GM12878 (cell line): ENCODE measurements at regions of chr14 and their contacts with region 1.

Region 1: DNA sequence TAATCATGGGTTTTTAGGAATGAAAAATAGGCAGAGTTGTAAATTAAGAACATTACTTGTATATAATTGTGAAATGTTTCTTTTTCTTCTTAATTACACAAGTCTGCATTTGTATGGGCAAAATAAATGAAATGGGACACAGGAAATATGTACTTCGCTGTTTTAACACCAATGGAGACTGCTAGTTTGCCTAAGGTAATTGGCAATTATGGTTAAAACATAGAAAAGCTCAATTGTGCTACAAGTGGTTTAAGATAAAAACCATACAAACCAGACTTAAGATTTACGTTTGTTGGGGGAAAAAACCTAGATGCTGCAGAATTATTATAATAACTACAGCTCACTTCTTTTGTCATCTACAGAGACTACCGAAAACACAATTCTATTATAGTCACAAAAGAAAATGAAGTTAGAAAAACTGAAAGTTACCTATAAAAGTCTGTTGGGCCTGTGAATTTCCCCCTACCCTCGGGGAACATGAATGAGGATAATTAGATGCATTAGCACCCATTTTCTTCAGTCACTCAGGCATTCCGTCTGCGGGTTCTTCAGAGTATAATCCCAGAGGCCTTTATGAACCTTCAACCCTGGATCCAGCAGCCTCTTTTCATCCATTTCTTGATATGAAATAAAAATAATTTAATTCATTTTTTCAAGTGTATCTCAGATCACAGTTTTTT is 37.2 kb downstream of the BTBD7 start:
- DNase-seq: no peak
- ATAC-seq: peak; percentile 31
- H3K4me3 ChIP-seq: no peak overlapping the region
- H3K27ac ChIP-seq: no peak overlapping the region
- H3K4me1 ChIP-seq: no peaks in the 10 kb centered on the region
- H3K27me3 ChIP-seq: no peaks in the 10 kb centered on the region
- CTCF ChIP-seq: no peak
- EP300 ChIP-seq: 0 out of 4 replicates have a peak, but pooled peaks of 1 of the 2 experiments have one; percentile 25
- POLR2A ChIP-seq: no peak
- RAD21 ChIP-seq: no peak

Region 2: GRCh38 chr14:93317875-93318807 is 22.5 kb after region 1 on chr14:
- CTCF ChIA-PET with region 1: interaction called, 3 read pairs
- POLR2A ChIA-PET with region 1: no interaction called
- RAD21 ChIA-PET with region 1: interaction called, 3 read pairs
- SMC1A ChIA-PET with region 1: interaction called, 15 read pairs
- in situ Hi-C with region 1: no loop called
- intact Hi-C with region 1: no loop called
- DNase-seq: no peak
- ATAC-seq: no peak
- H3K4me3 ChIP-seq: no peak overlapping the region
- H3K27ac ChIP-seq: no peak overlapping the region
- H3K4me1 ChIP-seq: peaks cover 21% of the 10 kb centered on the region
- H3K27me3 ChIP-seq: no peaks in the 10 kb centered on the region
- CTCF ChIP-seq: no peak
- EP300 ChIP-seq: no peak
- POLR2A ChIP-seq: no peak
- RAD21 ChIP-seq: no peak